Right ventricle myocardium superior (tissue), 1 donor: ENCODE measurements at regions of chr6 and their contacts with region 1.

Region 1: DNA sequence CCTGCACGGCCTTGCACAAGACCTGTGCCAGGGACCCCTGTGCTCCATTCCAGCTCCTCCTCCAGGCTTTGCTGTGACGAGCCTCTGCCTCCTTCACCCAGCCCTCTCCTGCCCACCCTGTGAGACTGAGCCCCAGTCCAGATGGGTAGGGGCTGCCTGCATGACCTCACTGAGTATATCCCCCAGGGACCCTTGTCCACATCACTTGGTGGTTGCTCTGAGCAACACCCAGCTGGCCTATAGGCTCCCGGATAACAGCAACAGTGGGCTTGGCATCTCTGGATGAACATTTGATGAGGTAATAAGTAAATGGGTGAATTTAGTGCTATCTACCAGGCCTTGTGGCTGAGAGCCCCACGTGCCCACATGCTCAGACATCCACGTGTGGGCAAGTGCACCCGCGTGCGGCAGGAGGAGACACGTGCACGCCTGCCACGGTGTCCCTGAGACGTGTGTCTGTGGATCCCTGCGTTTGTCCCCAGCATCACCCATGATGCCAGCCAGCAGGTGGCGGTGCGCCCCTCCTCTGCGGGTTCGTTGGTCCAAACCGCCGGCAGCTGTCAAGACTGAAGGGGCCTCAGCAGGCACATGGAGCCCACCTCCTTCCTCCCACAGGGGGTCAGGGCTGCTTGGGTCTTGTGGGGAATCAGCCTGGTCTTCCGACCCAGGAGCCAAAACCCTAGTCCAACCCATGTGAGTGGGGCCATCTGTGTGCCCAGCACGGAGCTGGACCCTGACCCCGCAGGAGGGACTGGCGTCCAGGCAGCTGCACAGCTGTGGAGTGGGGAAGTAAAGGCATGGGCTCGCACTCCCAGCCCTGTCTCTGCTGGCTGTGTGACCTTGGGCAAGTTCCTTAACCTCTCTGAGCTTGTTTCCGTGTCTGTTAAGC is 45.9 kb downstream of the FGD2 start:
- DNase-seq: peak; percentile 95
- ATAC-seq: peak; percentile 89

Region 2: DNA sequence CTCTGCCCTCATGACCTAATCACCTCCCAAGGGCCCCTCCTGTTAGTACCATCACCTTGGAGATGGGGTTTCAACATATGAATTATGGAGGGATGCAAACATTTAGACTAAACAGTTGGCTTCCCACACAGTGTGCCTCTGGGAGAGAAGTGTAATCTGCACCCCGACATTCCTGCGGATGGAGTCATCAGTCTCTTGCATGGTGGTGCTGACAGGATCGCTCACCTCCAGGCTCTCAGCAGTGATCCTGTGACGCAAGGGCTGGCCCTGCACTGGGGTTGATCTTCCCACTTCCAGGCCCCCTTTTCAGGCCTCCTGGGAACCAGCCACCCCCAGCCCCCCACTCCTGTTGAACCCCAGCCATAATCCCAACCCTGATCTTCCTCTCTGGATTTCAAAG is 112.8 kb before region 1 on chr6:
- intact Hi-C with region 1: no loop called
- DNase-seq: no peak
- ATAC-seq: peak; percentile 56

Region 3: DNA sequence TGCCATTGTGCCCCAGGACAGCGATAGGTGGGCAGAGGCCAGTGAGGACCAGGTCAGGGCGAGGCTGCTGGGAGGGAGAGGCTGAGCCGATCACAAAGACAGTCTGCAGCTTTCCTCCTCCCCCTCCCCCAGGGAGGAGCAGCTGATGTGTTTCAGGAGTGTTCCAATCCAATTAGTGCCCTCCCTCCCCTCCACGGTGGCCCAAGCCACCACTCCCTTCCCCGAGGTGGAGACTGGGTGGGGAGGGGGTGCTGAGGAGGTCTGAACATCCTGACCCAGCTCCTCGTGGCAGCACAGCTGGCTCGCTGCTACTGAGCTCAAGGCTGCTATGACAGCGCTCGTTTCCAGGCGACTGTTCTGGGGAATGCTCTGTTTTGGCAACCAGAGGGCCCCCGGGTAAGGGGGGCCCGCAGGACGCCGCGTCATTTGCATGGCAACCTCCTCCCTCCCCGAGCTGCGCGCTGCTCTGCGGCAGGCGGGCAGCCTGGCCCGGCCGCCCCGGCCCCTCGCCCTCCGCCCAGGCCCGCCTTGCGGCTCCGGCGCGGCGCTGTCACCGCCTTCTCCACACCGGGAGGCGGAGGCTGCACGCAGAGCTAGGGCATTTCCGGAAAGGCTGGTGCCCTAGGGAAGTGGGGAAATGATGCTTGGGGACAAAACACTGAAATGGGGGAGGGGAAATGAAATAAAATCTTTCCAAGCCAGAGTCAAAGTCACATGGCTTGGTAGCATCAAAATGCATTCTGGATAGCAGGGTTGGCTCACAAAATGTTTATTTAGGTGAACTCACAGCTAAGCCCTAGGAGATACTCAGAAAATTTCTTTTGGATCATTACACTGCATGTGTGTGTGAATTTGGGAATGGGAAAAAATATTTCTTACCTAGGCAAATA is 51.1 kb after region 1 on chr6:
- intact Hi-C with region 1: loop called (anchors 10 kb)
- DNase-seq: peak; percentile 93
- ATAC-seq: peak; percentile 92

Region 4: GRCh38 chr6:37173493-37174195 is 122.3 kb after region 1 on chr6:
- intact Hi-C with region 1: loop called (anchors 1 kb)
- DNase-seq: no peak
- ATAC-seq: no peak